Breast epithelium (tissue), 4 donors: ENCODE measurements at regions of chr6 and their contacts with region 1.

Region 1: GRCh38 chr6:134002821-134003220 is 49.6 kb downstream of the SLC2A12 start:
- DNase-seq: peak in 1 of 2 donors; percentile 39
- H3K4me3 ChIP-seq: no peak overlapping the region
- H3K27ac ChIP-seq: peak overlapping the region; percentile 46 to 49
- H3K4me1 ChIP-seq: no peaks in the 10 kb centered on the region
- H3K27me3 ChIP-seq: no peaks in the 10 kb centered on the region
- CTCF ChIP-seq: no peak
- POLR2A ChIP-seq: no peak

Region 2: DNA sequence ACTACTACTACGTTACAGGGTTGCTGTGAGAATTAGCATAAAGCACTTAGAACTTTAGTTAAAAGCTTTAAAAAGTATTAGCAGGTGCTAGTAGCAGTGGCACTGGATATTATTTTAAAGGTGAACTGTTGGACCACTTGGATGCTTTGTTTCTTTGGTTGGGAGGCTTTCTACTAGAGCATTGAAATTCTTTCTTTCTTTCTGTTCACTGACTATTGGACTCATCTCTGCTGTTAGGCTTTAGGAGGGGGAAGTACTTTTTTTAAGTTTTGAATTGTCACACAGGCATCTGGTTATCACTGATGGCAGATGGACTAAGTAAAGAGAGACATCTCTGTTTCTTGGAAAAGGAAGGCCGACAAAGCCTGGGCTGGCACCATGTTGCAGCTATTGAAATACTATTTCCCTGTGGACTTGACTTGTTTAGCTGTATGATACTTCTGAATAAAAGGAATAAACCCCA is 45.0 kb before region 1 on chr6:
- intact Hi-C with region 1: loop called (anchors 2 kb)
- DNase-seq: no peak
- H3K4me3 ChIP-seq: no peak overlapping the region
- H3K27ac ChIP-seq: no peak overlapping the region
- H3K4me1 ChIP-seq: peaks cover 0 to 4% of the 10 kb centered on the region in 2 donors
- H3K27me3 ChIP-seq: no peaks in the 10 kb centered on the region
- CTCF ChIP-seq: no peak
- POLR2A ChIP-seq: no peak